MCF 10A (cell line): ENCODE measurements at regions of chr19 and their contacts with region 1.

Region 1: DNA sequence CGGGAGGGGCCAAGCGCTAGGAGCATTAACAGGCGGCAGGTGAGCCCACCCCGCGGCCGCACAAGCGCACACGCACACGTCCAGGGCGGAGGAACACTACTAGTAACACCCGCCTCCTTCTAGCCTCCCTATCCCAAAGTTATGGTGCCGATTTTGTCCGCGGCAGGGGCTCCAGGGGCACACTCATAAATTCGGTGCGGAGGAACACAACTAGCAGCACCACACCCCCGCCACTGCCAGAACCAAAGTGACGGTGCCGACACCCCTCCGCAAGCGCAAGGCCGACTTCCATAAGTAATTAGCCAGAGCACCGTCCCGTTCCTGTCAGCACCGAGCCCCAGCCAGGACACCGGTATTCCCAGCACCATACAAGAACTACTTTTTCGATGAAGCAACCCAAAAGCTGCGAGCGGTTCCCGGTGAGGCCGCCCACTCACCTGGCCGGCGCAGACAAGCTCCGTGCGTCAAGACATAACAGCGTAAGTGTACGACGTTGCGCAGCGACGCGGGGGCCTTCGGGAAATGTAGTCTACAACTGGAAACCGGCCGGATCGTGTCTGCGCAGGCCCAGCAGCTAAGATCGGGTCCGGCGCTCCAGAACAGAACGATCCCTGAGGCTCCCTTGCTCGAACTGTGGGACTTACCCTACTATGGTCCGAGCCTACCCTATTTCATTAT is at the starts of genes ZNF540 and ZNF571:
- DNase-seq: peak; percentile 97
- H3K4me3 Mint-ChIP-seq: peak within 1 kb of the TSS; percentile 96
- H3K27ac Mint-ChIP-seq: peak within 1 kb of the TSS; percentile 98
- H3K4me1 Mint-ChIP-seq: peaks cover 4% of the 10 kb centered on the region
- H3K27me3 Mint-ChIP-seq: no peaks in the 10 kb centered on the region
- CTCF ChIP-seq: no peak
- total RNA-seq, gene ZNF540: 1.1 TPM in 2 replicates
- total RNA-seq, gene ZNF571: 4.2 and 6.3 TPM in 2 replicates

Region 2: DNA sequence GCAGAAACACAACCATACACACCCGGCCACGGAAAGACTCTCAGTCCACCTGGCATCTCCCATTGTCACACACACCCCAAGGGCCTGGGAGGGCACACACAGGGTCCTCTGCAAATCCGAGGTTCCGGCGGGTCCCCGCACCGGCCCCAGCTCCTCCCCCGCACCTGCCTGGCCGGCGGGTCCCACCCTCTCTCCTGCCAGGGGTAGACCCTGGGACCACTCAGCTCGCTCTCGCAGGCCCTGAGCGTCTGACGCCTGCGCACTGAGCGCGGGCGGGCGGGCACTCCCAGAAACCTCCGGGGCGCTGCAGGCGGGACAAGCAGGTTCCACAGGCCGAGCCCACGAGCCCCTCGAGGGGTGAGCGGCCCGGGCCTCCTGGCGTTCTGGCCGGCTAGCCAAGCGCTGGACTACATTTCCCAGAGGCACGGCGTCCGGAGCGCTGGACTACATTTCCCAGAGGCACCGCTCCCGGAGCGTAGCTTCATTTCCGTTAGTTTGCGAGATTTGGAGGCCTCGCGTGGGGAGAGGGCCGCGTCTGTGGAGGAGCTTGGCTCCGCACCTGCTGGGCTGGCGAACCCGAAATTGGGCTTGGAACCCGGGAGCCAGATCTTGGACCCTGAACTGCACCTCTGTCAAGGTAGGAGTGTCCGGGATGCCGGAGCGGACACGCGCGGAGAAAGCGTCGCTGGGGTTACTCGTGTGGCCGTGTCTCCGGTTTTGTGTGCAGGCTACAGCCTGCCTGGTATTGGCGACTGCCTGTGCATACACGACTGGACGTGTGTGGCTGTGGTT is 516.3 kb before region 1 on chr19 and contains the start of gene ZNF420:
- CTCF ChIA-PET with region 1: no interaction called
- POLR2A ChIA-PET with region 1: interaction called, 11 read pairs
- intact Hi-C with region 1: no loop called
- DNase-seq: peak; percentile 93
- H3K4me3 Mint-ChIP-seq: peak within 1 kb of the TSS; percentile 95
- H3K27ac Mint-ChIP-seq: peak within 1 kb of the TSS; percentile 93
- H3K4me1 Mint-ChIP-seq: peaks cover 12% of the 10 kb centered on the region
- H3K27me3 Mint-ChIP-seq: no peaks in the 10 kb centered on the region
- CTCF ChIP-seq: no peak
- total RNA-seq, gene ZNF420: 9.0 and 11.0 TPM in 2 replicates

Region 3: DNA sequence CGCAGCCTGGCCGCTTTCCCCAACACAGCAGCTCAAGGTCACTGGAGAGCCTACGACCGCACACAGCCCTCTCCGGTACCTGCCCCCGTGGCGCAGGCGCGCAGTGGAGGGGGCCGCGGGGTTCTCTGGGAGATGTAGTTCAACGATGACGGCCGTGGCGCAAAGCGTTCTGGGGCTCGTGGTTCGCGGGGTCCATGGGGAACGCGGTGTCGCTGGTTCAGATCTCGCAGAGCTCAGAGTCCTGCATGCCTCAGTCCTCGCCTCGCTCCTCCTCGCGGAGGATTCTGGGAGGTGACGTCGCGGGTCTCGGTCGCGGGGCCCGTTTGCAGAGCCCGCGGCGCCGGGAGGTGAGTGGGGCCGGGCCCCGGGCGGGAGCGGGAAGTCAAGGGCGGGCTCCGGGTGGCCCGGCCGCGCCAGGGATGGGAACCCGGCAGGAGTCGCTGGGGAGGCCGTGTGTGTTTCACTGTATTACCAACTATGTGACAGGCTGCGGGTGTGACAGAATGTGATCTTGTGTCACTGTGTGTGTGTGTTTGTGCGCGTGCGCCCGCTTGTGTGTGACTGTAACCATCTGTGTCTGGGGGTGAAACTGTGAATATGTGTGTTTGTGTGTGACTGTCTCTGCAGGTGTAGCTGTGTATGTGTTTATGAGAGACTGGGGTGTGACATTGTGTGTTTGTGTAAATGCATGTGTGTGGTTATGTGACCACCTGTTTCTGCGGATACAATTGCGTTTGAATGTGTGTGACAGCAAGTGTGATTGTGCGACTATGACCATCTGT is 223.4 kb before region 1 on chr19 and contains the start of gene ZNF527:
- CTCF ChIA-PET with region 1: interaction called, 3 read pairs
- POLR2A ChIA-PET with region 1: interaction called, 20 read pairs
- intact Hi-C with region 1: no loop called
- DNase-seq: peak; percentile 95
- H3K4me3 Mint-ChIP-seq: peak within 1 kb of the TSS; percentile 84
- H3K27ac Mint-ChIP-seq: peak within 1 kb of the TSS; percentile 88
- H3K4me1 Mint-ChIP-seq: peaks cover 16% of the 10 kb centered on the region
- H3K27me3 Mint-ChIP-seq: no peaks in the 10 kb centered on the region
- CTCF ChIP-seq: no peak
- total RNA-seq, gene ZNF527: 4.3 and 5.0 TPM in 2 replicates

Region 4: DNA sequence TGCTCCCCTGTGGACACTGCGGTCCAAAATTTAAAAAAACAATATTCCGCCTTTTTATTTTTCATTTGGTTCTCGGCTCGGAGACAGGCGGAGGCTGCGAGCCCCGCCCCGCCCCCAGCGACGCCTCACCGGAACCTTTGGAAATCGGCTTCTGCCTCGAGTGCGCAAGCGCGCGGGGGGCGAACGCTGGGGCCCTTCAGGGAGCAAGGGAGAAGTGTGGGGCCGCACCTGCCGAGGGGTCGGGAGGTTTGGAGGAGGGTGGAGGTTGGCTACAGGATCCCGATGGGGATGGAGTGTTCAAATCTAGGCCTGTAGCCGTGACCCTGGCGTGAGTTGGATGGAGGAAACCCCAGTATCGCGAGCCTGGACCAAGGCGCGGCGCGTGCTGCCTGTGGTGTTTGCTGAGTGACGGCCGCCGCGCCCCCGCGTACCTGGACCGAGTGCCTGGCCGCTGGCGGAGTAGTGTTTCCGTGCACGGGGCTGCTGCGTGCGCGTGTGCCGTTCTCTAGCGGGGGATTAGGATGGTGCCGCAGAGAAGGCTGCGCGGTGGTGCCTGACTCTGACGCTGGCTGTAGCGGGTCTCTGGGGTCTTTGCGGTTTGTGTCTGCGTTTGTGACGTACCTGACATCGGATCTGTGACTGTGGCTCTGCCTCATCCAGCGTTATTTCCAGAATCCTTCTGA is 61.4 kb after region 1 on chr19:
- CTCF ChIA-PET with region 1: interaction called, 8 read pairs
- POLR2A ChIA-PET with region 1: interaction called, 70 read pairs
- intact Hi-C with region 1: loop called (anchors 1 kb)
- DNase-seq: peak; percentile 87
- H3K4me3 Mint-ChIP-seq: peak overlapping the region; percentile 89
- H3K27ac Mint-ChIP-seq: peak overlapping the region; percentile 91
- H3K4me1 Mint-ChIP-seq: peaks cover 9% of the 10 kb centered on the region
- H3K27me3 Mint-ChIP-seq: no peaks in the 10 kb centered on the region
- CTCF ChIP-seq: no peak

Region 5: DNA sequence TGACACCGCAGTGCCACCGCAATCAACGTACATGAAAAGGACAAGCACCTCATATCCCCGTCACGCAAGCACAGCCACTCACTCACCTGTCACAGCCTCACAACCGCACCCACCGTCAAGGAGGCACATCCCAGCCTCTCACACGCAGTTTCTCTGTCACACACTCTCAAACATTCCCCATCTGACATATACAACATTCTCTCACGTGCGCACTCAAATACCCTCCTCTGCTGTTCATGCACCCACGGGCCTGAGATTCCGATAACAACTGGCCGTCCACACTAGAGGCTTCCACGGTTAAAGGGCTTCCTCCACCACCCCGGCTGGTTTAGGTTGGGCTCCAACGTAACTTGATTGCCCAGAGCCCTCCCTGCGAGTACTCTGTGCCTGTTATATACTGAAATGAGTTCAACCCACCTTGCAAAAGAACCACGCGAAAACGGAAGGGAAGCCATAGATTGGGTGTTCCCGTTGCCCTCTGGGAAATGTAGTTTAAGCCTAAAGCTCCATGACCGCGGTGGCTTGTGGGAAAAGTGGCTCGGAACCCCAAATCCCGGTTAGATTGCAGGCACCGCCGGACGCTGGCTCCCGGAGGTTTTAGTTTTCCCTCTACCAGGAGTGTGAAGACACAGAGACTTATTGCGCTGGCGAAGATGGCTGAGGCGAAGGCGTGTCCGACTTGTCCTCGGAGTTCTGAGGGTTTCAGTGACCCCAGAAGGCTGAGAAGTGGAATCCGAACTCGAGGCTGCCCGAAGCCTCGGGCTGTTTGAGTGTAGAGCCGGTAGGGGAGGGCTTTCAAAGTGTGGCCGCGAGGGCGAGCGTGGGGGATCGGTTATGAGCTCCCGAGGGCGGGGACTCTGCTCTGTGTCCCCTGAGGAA is 184.9 kb after region 1 on chr19 and contains the start of gene ZNF573:
- CTCF ChIA-PET with region 1: no interaction called
- POLR2A ChIA-PET with region 1: interaction called, 45 read pairs
- intact Hi-C with region 1: loop called (anchors 1 kb)
- DNase-seq: peak; percentile 95
- H3K4me3 Mint-ChIP-seq: peak within 1 kb of the TSS; percentile 88
- H3K27ac Mint-ChIP-seq: peak within 1 kb of the TSS; percentile 95
- H3K4me1 Mint-ChIP-seq: peaks cover 5% of the 10 kb centered on the region
- H3K27me3 Mint-ChIP-seq: no peaks in the 10 kb centered on the region
- CTCF ChIP-seq: no peak
- total RNA-seq, gene ZNF573: 6.1 and 11.9 TPM in 2 replicates

Region 6: GRCh38 chr19:37803250-37803854 is 208.9 kb after region 1 on chr19:
- CTCF ChIA-PET with region 1: no interaction called
- POLR2A ChIA-PET with region 1: no interaction called
- intact Hi-C with region 1: no loop called
- DNase-seq: no peak
- H3K4me3 Mint-ChIP-seq: no peak overlapping the region
- H3K27ac Mint-ChIP-seq: no peak overlapping the region
- H3K4me1 Mint-ChIP-seq: no peaks in the 10 kb centered on the region
- H3K27me3 Mint-ChIP-seq: no peaks in the 10 kb centered on the region
- CTCF ChIP-seq: no peak